Transverse colon (tissue), 4 donors: ENCODE measurements at regions of chr11 and their contacts with region 1.

Region 1: DNA sequence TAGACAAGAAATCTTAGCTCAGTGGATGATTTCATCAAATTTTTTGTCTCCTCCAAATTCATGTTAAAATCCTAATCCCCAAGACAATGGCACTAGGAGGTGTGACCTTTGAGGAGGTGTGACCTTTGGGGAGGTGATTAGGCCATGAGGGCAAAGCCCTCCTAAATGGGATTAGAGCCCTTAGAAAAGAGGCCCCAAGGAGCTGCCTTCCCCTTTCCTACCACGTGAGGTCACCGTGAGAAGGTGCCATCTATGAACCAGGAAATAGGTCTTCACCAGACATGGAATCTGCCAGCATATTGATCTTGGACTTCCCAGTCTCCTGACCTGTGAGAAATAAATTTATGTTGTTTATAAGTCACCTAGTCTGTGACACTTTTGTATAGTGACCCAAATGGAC is 138.7 kb downstream of the TRIM29 start:
- DNase-seq: no peak
- H3K4me3 ChIP-seq: no peak overlapping the region
- H3K27ac ChIP-seq: no peak overlapping the region
- H3K4me1 ChIP-seq: no peaks in the 10 kb centered on the region
- H3K27me3 ChIP-seq: no peaks in the 10 kb centered on the region
- CTCF ChIP-seq: no peak
- EP300 ChIP-seq: no peak
- POLR2A ChIP-seq: no peak

Region 2: GRCh38 chr11:120281143-120281795 is 282.0 kb after region 1 on chr11:
- in situ Hi-C with region 1: loop called in 1 of 4 experiments (anchors 25 kb)
- intact Hi-C with region 1: no loop called
- DNase-seq: no peak
- H3K4me3 ChIP-seq: no peak overlapping the region
- H3K27ac ChIP-seq: no peak overlapping the region
- H3K4me1 ChIP-seq: no peaks in the 10 kb centered on the region
- H3K27me3 ChIP-seq: no peaks in the 10 kb centered on the region
- CTCF ChIP-seq: no peak
- EP300 ChIP-seq: no peak
- POLR2A ChIP-seq: no peak

Region 3: DNA sequence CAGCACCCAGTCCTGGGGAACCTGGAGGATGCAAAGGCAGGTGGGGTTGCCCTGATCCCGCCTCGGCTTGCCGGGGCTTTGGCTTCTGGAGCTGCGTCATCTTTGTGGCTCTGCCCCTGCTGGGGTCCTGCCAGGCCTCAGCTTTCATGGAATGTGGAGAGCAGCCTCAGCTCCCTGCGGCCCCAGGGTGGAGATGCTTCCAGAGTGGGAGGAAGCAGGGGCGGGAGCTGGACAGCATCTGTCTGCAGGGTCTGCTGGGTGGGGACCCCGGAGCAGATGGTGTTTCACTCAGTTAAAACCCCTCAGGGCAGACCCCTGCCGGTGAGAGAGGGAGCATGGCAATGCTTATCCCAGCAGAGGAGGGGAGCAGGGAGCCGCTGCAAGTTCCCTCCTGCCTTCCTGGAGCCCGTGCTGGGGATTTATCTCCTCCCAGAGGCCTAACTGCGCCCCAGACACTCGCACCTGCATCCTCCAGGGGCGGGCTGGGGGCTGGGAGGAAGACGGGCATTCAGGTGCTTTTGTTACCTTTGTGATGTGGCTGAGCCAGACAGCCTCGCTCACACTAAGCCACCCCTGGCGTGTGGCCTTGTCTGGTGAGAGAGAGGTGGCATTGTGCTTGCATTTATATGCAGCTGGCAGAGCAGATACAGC is 528.0 kb after region 1 on chr11:
- in situ Hi-C with region 1: no loop called
- intact Hi-C with region 1: no loop called
- DNase-seq: no peak
- H3K4me3 ChIP-seq: no peak overlapping the region
- H3K27ac ChIP-seq: no peak overlapping the region
- H3K4me1 ChIP-seq: peaks cover 0 to 12% (median 2%) of the 10 kb centered on the region in 4 donors
- H3K27me3 ChIP-seq: peaks cover 93% of the 10 kb centered on the region
- CTCF ChIP-seq: no peak
- EP300 ChIP-seq: no peak
- POLR2A ChIP-seq: no peak